Activated naive CD4-positive, alpha-beta T cell treated with anti-CD3 and anti-CD28 coated beads, Interleukin-2, amount 10 ng/mL, durations not matched to agents 7 days and 5 days (primary cell): ENCODE measurements at regions of chr14 and their contacts with region 1.

Region 1: DNA sequence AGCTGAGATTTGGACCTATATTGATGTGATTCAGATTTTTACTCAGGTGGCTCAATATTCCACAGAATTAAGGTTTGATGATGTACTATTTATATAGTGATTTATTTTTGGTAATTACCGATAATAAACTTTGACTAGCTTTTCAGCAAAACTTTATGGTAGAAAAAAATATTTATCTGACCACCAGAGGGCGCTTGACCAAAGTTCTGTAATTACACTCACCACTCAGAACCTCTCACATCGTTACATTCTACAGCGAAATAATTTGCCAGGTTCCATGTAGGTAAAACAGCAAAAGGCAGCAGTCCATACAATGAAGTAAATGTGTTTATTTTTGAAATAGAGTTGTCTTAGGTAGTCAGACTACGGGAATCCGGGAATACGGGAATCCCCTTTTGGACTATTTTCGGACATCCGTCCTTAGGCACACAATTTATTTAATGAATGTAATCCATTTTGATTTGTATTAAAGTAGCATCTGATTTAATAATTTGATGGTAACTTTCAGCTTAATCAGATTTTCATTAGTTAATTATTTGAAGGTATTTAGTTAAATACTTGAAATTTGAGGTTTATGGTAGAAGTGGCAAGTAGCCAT is 143.0 kb upstream of the DDHD1 start:
- DNase-seq: no peak
- H3K4me3 Mint-ChIP-seq: no peak overlapping the region
- H3K27ac Mint-ChIP-seq: no peak overlapping the region
- H3K4me1 Mint-ChIP-seq: no peaks in the 10 kb centered on the region
- H3K27me3 Mint-ChIP-seq: no peaks in the 10 kb centered on the region

Region 2: GRCh38 chr14:53247596-53248370 is 48.3 kb before region 1 on chr14:
- CTCF ChIA-PET with region 1: no interaction called
- DNase-seq: no peak
- H3K4me3 Mint-ChIP-seq: no peak overlapping the region
- H3K27ac Mint-ChIP-seq: no peak overlapping the region
- H3K4me1 Mint-ChIP-seq: no peaks in the 10 kb centered on the region
- H3K27me3 Mint-ChIP-seq: no peaks in the 10 kb centered on the region

Region 3: DNA sequence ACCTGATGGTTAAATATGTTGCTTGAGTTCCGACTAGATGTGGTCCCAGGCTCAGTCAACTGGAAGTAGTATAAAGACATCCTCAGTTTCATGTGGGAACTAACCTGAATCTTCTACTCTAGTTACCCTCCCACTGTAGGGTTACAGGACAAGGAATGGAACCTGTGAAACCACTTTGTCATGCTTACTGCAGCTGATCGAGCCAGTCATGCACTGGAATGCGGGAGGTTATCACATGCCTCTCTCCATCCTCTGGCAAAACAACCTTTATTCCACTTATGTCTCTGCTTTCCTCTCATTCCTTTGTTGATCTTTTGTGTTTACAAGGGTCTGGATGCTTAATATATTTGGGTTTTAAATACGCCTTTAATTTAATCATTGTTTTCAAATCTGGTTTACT is 31.1 kb before region 1 on chr14:
- CTCF ChIA-PET with region 1: no interaction called
- DNase-seq: no peak
- H3K4me3 Mint-ChIP-seq: no peak overlapping the region
- H3K27ac Mint-ChIP-seq: no peak overlapping the region
- H3K4me1 Mint-ChIP-seq: no peaks in the 10 kb centered on the region
- H3K27me3 Mint-ChIP-seq: no peaks in the 10 kb centered on the region

Region 4: GRCh38 chr14:53306267-53306721 is 10.2 kb after region 1 on chr14:
- CTCF ChIA-PET with region 1: interaction called, 31 read pairs
- DNase-seq: peak; percentile 65
- H3K4me3 Mint-ChIP-seq: peak overlapping the region; percentile 39
- H3K27ac Mint-ChIP-seq: no peak overlapping the region
- H3K4me1 Mint-ChIP-seq: peaks cover 15% of the 10 kb centered on the region
- H3K27me3 Mint-ChIP-seq: peaks cover 9% of the 10 kb centered on the region